GM12878 (cell line): ENCODE measurements at regions of chr10 and their contacts with region 1.

Region 1: DNA sequence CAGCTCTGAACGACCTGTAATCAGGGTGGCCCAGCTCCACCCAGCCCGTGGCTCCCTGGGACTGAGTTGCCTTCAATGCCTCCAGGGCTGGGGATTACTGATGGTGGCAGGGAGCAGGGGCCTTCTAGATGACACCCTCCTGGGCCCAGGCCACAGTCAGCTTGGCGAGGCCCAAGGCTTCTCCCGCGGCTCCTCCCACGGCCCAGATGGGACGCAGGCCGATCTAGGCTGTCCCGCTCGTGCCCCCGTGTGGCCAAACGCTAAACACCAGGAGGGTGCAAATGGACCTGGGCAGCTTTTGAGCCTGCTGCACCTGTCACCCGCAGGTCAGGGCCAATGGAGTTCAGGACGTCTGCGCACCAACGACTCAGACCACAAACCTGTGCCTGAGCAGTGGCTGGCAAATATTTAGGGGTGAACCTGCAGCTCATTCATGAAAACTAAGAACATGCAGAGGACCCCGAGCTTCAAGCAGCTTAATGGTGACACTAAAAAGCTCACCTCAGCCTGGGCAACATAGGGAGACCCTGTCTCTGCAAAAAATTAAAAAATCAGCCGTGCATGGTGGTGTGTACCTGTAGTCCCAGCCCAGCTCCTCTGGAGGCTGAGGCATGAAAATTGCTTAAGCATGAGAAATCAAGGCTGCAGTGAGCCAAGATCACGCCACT is 43.2 kb downstream of the ASB13 start:
- DNase-seq: peak; percentile 23
- ATAC-seq: peak; percentile 99
- H3K4me3 ChIP-seq: no peak overlapping the region
- H3K27ac ChIP-seq: no peak overlapping the region
- H3K4me1 ChIP-seq: no peaks in the 10 kb centered on the region
- H3K27me3 ChIP-seq: peaks cover 2 to 9% of the 10 kb centered on the region in 2 experiments; a peak in 3 of 4 replicates
- CTCF ChIP-seq: peak; percentile 87 to 93 (median 89)
- EP300 ChIP-seq: no peak
- POLR2A ChIP-seq: no peak
- RAD21 ChIP-seq: peak; percentile 91

Region 2: GRCh38 chr10:5453749-5454489 is 169.3 kb before region 1 on chr10:
- CTCF ChIA-PET with region 1: interaction called, 535 read pairs
- POLR2A ChIA-PET with region 1: no interaction called
- RAD21 ChIA-PET with region 1: interaction called, 136 read pairs
- SMC1A ChIA-PET with region 1: interaction called, 21 read pairs
- in situ Hi-C with region 1: no loop called
- intact Hi-C with region 1: no loop called
- DNase-seq: no peak
- ATAC-seq: no peak
- H3K4me3 ChIP-seq: no peak overlapping the region
- H3K27ac ChIP-seq: no peak overlapping the region
- H3K4me1 ChIP-seq: no peaks in the 10 kb centered on the region
- H3K27me3 ChIP-seq: no peaks in the 10 kb centered on the region
- CTCF ChIP-seq: no peak
- EP300 ChIP-seq: no peak
- POLR2A ChIP-seq: no peak
- RAD21 ChIP-seq: no peak

Region 3: GRCh38 chr10:5461914-5462840 is 161.0 kb before region 1 on chr10:
- CTCF ChIA-PET with region 1: interaction called, 12 read pairs
- POLR2A ChIA-PET with region 1: no interaction called
- RAD21 ChIA-PET with region 1: interaction called, 4 read pairs
- SMC1A ChIA-PET with region 1: interaction called, 3 read pairs
- in situ Hi-C with region 1: no loop called
- intact Hi-C with region 1: no loop called
- DNase-seq: no peak
- ATAC-seq: no peak
- H3K4me3 ChIP-seq: no peak overlapping the region
- H3K27ac ChIP-seq: no peak overlapping the region
- H3K4me1 ChIP-seq: no peaks in the 10 kb centered on the region
- H3K27me3 ChIP-seq: no peaks in the 10 kb centered on the region
- CTCF ChIP-seq: no peak
- EP300 ChIP-seq: no peak
- POLR2A ChIP-seq: no peak
- RAD21 ChIP-seq: no peak

Region 4: DNA sequence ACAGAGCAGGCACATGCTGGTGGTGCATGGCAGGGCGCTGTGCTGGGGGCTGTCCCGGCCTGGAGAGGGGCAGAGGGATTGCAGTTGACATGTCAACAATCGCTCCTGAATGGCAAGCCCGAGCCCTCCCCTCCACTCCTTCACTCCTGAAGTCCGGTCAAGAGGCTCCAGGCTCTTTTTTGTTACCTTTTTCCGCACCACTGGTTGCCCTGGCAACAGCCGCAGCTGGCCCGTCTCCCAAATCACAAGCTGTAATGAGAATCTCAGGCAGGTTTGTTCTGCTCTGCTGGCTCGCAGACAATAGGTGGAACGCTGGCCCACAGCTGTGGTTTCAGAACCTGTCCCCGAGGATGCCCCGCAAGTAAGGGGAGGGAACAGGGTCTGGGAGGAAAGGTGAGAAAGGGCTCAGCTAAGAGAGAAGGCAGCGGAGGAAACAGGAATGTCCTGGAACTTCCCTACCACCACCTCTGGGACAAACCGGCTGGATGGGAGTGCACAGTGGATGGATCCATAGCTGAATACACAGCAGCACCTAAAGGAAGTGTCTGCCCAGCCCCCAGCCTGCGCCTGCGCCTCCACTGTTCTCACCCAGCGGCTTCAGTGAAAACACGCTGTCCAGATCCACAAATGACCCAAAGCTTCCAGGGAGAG is 39.6 kb before region 1 on chr10:
- CTCF ChIA-PET with region 1: interaction called, 29 read pairs
- POLR2A ChIA-PET with region 1: no interaction called
- RAD21 ChIA-PET with region 1: interaction called, 10 read pairs
- SMC1A ChIA-PET with region 1: interaction called, 4 read pairs
- in situ Hi-C with region 1: no loop called
- intact Hi-C with region 1: no loop called
- DNase-seq: peak; percentile 37
- ATAC-seq: peak; percentile 73
- H3K4me3 ChIP-seq: 0 out of 2 replicates have a peak overlapping the region, but pooled peaks have one; percentile 3
- H3K27ac ChIP-seq: peak overlapping the region; percentile 28
- H3K4me1 ChIP-seq: peaks cover 51% of the 10 kb centered on the region
- H3K27me3 ChIP-seq: peaks cover 0 to 1% of the 10 kb centered on the region in 2 experiments; a peak in 2 of 4 replicates
- CTCF ChIP-seq: no peak
- EP300 ChIP-seq: peak; percentile 66 to 67; a peak in 3 of 4 replicates
- POLR2A ChIP-seq: no peak
- RAD21 ChIP-seq: no peak

Region 5: GRCh38 chr10:5634918-5635317 is 11.7 kb after region 1 on chr10:
- CTCF ChIA-PET with region 1: interaction called, 15 read pairs
- POLR2A ChIA-PET with region 1: no interaction called
- RAD21 ChIA-PET with region 1: no interaction called
- SMC1A ChIA-PET with region 1: interaction called, 5 read pairs
- in situ Hi-C with region 1: no loop called
- intact Hi-C with region 1: no loop called
- DNase-seq: no peak
- ATAC-seq: no peak
- H3K4me3 ChIP-seq: no peak overlapping the region
- H3K27ac ChIP-seq: no peak overlapping the region
- H3K4me1 ChIP-seq: no peaks in the 10 kb centered on the region
- H3K27me3 ChIP-seq: no peaks in the 10 kb centered on the region; a peak in 1 of 4 replicates
- CTCF ChIP-seq: no peak
- EP300 ChIP-seq: no peak
- POLR2A ChIP-seq: no peak
- RAD21 ChIP-seq: no peak

Region 6: GRCh38 chr10:5840314-5841307 is 217.4 kb after region 1 on chr10:
- CTCF ChIA-PET with region 1: no interaction called
- POLR2A ChIA-PET with region 1: no interaction called
- RAD21 ChIA-PET with region 1: no interaction called
- SMC1A ChIA-PET with region 1: no interaction called
- in situ Hi-C with region 1: no loop called
- intact Hi-C with region 1: no loop called
- DNase-seq: peak; percentile 59
- ATAC-seq: peak; percentile 90
- H3K4me3 ChIP-seq: peak overlapping the region; percentile 28; the same call in 1 of the 2 replicates
- H3K27ac ChIP-seq: peak overlapping the region; percentile 83
- H3K4me1 ChIP-seq: peaks cover 42% of the 10 kb centered on the region
- H3K27me3 ChIP-seq: no peaks in the 10 kb centered on the region
- CTCF ChIP-seq: no peak
- EP300 ChIP-seq: peak; percentile 33 to 51; a peak in 2 of 4 replicates
- POLR2A ChIP-seq: peak; percentile 92
- RAD21 ChIP-seq: 0 out of 2 replicates have a peak, but pooled peaks have one; percentile 18

Region 7: GRCh38 chr10:6009150-6009549 is 385.9 kb after region 1 on chr10:
- CTCF ChIA-PET with region 1: no interaction called
- POLR2A ChIA-PET with region 1: no interaction called
- RAD21 ChIA-PET with region 1: no interaction called
- SMC1A ChIA-PET with region 1: no interaction called
- in situ Hi-C with region 1: no loop called
- intact Hi-C with region 1: no loop called
- DNase-seq: no peak
- ATAC-seq: peak; percentile 53
- H3K4me3 ChIP-seq: no peak overlapping the region
- H3K27ac ChIP-seq: no peak overlapping the region
- H3K4me1 ChIP-seq: no peaks in the 10 kb centered on the region
- H3K27me3 ChIP-seq: no peaks in the 10 kb centered on the region
- CTCF ChIP-seq: no peak
- EP300 ChIP-seq: no peak
- POLR2A ChIP-seq: no peak
- RAD21 ChIP-seq: no peak